SK-N-SH (cell line): ENCODE measurements at regions of chr14 and their contacts with region 1.

Region 1: GRCh38 chr14:67666750-67667449 is 7.5 kb downstream of the VTI1B start:
- DNase-seq: peak; percentile 59
- H3K4me3 ChIP-seq: no peak overlapping the region; a peak in 1 of 4 replicates
- H3K27ac ChIP-seq: no peak overlapping the region
- H3K4me1 ChIP-seq: 0 out of 4 replicates have a peak, but pooled peaks cover 0 to 3% of the 10 kb centered on the region in 2 experiments
- H3K27me3 ChIP-seq: no peaks in the 10 kb centered on the region
- CTCF ChIP-seq: peak; percentile 78
- EP300 ChIP-seq: no peak
- RAD21 ChIP-seq: peak; percentile 82

Region 2: GRCh38 chr14:67583711-67584644 is 82.9 kb before region 1 on chr14:
- CTCF ChIA-PET with region 1: interaction called, 47 read pairs
- POLR2A ChIA-PET with region 1: no interaction called
- DNase-seq: peak; percentile 80
- H3K4me3 ChIP-seq: no peak overlapping the region; a peak in 1 of 4 replicates
- H3K27ac ChIP-seq: no peak overlapping the region
- H3K4me1 ChIP-seq: no peaks in the 10 kb centered on the region
- H3K27me3 ChIP-seq: no peaks in the 10 kb centered on the region
- CTCF ChIP-seq: peak; percentile 74
- EP300 ChIP-seq: no peak
- RAD21 ChIP-seq: peak; percentile 85

Region 3: GRCh38 chr14:67650694-67651093 is 16.2 kb before region 1 on chr14:
- CTCF ChIA-PET with region 1: interaction called, 11 read pairs
- POLR2A ChIA-PET with region 1: no interaction called
- DNase-seq: no peak
- H3K4me3 ChIP-seq: no peak overlapping the region
- H3K27ac ChIP-seq: peak overlapping the region in 1 of 2 experiments; percentile 68; a peak in 1 of 4 replicates
- H3K4me1 ChIP-seq: peaks cover 0 to 6% of the 10 kb centered on the region in 2 experiments; a peak in 1 of 4 replicates
- H3K27me3 ChIP-seq: no peaks in the 10 kb centered on the region
- CTCF ChIP-seq: no peak
- EP300 ChIP-seq: no peak
- RAD21 ChIP-seq: no peak

Region 4: GRCh38 chr14:67680121-67680602 is 13.3 kb after region 1 on chr14:
- CTCF ChIA-PET with region 1: no interaction called
- POLR2A ChIA-PET with region 1: no interaction called
- DNase-seq: no peak
- H3K4me3 ChIP-seq: no peak overlapping the region
- H3K27ac ChIP-seq: peak overlapping the region in 1 of 2 experiments; percentile 46; a peak in 2 of 4 replicates
- H3K4me1 ChIP-seq: peaks cover 4 to 8% of the 10 kb centered on the region in 2 experiments; a peak in 2 of 4 replicates
- H3K27me3 ChIP-seq: no peaks in the 10 kb centered on the region
- CTCF ChIP-seq: no peak
- EP300 ChIP-seq: no peak
- RAD21 ChIP-seq: no peak

Region 5: DNA sequence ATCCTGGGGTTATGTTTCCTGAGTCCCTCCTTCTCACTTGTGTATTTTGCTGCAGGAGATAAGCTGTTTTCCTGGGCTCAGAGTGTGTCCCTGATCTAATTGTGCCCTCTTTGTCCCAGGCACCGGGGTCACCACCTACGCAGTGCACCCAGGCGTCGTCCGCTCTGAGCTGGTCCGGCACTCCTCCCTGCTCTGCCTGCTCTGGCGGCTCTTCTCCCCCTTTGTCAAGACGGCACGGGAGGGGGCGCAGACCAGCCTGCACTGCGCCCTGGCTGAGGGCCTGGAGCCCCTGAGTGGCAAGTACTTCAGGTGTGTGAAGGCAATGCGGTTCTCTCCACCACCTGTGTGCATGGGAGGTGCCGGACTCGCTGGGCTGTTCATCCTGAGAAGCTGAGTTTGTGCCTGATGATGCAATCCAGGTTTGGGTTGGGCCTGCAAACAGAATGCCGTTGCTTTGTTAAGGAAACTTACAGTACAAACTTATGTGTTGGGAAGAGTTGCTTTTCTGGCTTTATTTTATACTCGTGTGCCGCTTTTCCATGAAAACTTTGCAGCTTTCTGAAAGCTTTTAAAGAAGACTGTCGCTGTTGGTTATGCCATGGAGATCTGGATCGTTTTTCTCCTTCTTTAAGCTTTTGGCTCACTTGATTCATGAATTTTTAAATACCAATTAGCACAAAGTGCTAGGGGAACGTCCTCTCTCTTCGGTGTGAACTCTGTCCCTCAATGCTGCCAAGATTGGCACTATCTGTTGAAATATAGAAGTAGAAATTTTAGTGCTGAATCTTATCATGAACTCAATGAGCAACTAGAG is 62.4 kb after region 1 on chr14:
- CTCF ChIA-PET with region 1: no interaction called
- POLR2A ChIA-PET with region 1: no interaction called
- DNase-seq: no peak
- H3K4me3 ChIP-seq: no peak overlapping the region
- H3K27ac ChIP-seq: no peak overlapping the region
- H3K4me1 ChIP-seq: no peaks in the 10 kb centered on the region
- H3K27me3 ChIP-seq: peaks cover 10% of the 10 kb centered on the region; the same call in 1 of the 2 replicates
- CTCF ChIP-seq: no peak
- EP300 ChIP-seq: no peak
- RAD21 ChIP-seq: no peak

Region 6: GRCh38 chr14:68718023-68718995 is 1051.4 kb after region 1 on chr14:
- CTCF ChIA-PET with region 1: no interaction called
- POLR2A ChIA-PET with region 1: no interaction called
- DNase-seq: no peak
- H3K4me3 ChIP-seq: no peak overlapping the region
- H3K27ac ChIP-seq: no peak overlapping the region
- H3K4me1 ChIP-seq: no peaks in the 10 kb centered on the region
- H3K27me3 ChIP-seq: no peaks in the 10 kb centered on the region
- CTCF ChIP-seq: peak; percentile 45; the same call in 1 of the 2 replicates
- EP300 ChIP-seq: no peak
- RAD21 ChIP-seq: no peak